CD8-positive, alpha-beta T cell (primary cell): ENCODE measurements at regions of chr2 and their contacts with region 1.

Region 1: GRCh38 chr2:148644883-148645538 is 460 bp downstream of the EPC2 start:
- DNase-seq: peak; percentile 90 to 98 (median 94)
- ATAC-seq: peak; percentile 78
- H3K4me3 ChIP-seq: peak overlapping the region; percentile 85 to 87
- H3K4me3 Mint-ChIP-seq: peak overlapping the region; percentile 87
- H3K27ac ChIP-seq: peak overlapping the region; percentile 87 to 96
- H3K27ac Mint-ChIP-seq: peak overlapping the region; percentile 98
- H3K4me1 ChIP-seq: peaks cover 33% of the 10 kb centered on the region
- H3K4me1 Mint-ChIP-seq: peaks cover 36% of the 10 kb centered on the region
- H3K27me3 ChIP-seq: no peaks in the 10 kb centered on the region
- H3K27me3 Mint-ChIP-seq: no peaks in the 10 kb centered on the region
- CTCF ChIP-seq: no peak

Region 2: GRCh38 chr2:148020111-148021058 is 624.6 kb before region 1 on chr2 and contains the start of gene ORC4:
- CTCF ChIA-PET with region 1: no interaction called
- POLR2A ChIA-PET with region 1: interaction called, 12 read pairs
- intact Hi-C with region 1: loop called (anchors 1 to 2 kb)
- DNase-seq: peak; percentile 91 to 100 (median 96)
- ATAC-seq: peak; percentile 86
- H3K4me3 ChIP-seq: peak within 1 kb of the TSS; percentile 96 to 97
- H3K4me3 Mint-ChIP-seq: peak within 1 kb of the TSS; percentile 100
- H3K27ac ChIP-seq: peak within 1 kb of the TSS; percentile 85 to 94
- H3K27ac Mint-ChIP-seq: peak within 1 kb of the TSS; percentile 98
- H3K4me1 ChIP-seq: peaks cover 47% of the 10 kb centered on the region
- H3K4me1 Mint-ChIP-seq: peaks cover 73% of the 10 kb centered on the region
- H3K27me3 ChIP-seq: no peaks in the 10 kb centered on the region
- H3K27me3 Mint-ChIP-seq: no peaks in the 10 kb centered on the region
- CTCF ChIP-seq: no peak
- total RNA-seq, gene ORC4: 28.5 to 29.9 TPM

Region 3: GRCh38 chr2:148071351-148071750 is 573.7 kb before region 1 on chr2:
- CTCF ChIA-PET with region 1: no interaction called
- POLR2A ChIA-PET with region 1: no interaction called
- intact Hi-C with region 1: no loop called
- DNase-seq: no peak
- ATAC-seq: no peak
- H3K4me3 ChIP-seq: no peak overlapping the region
- H3K4me3 Mint-ChIP-seq: no peak overlapping the region
- H3K27ac ChIP-seq: no peak overlapping the region
- H3K27ac Mint-ChIP-seq: no peak overlapping the region
- H3K4me1 ChIP-seq: no peaks in the 10 kb centered on the region
- H3K4me1 Mint-ChIP-seq: peaks cover 9% of the 10 kb centered on the region
- H3K27me3 ChIP-seq: no peaks in the 10 kb centered on the region
- H3K27me3 Mint-ChIP-seq: no peaks in the 10 kb centered on the region
- CTCF ChIP-seq: no peak

Region 4: GRCh38 chr2:148658807-148659722 is 14.1 kb after region 1 on chr2:
- CTCF ChIA-PET with region 1: no interaction called
- POLR2A ChIA-PET with region 1: interaction called, 9 read pairs
- intact Hi-C with region 1: loop called in 1 of 2 experiments (anchors 1 kb)
- DNase-seq: peak in 2 of 9 experiments; percentile 58 to 75
- ATAC-seq: peak; percentile 81
- H3K4me3 ChIP-seq: no peak overlapping the region
- H3K4me3 Mint-ChIP-seq: peak overlapping the region; percentile 66
- H3K27ac ChIP-seq: peak overlapping the region in 1 of 2 experiments; percentile 56
- H3K27ac Mint-ChIP-seq: peak overlapping the region; percentile 85
- H3K4me1 ChIP-seq: peaks cover 68% of the 10 kb centered on the region
- H3K4me1 Mint-ChIP-seq: peaks cover 78% of the 10 kb centered on the region
- H3K27me3 ChIP-seq: no peaks in the 10 kb centered on the region
- H3K27me3 Mint-ChIP-seq: no peaks in the 10 kb centered on the region
- CTCF ChIP-seq: no peak

Region 5: GRCh38 chr2:148764815-148765214 is 119.8 kb after region 1 on chr2:
- CTCF ChIA-PET with region 1: no interaction called
- POLR2A ChIA-PET with region 1: interaction called, 3 read pairs
- intact Hi-C with region 1: loop called (anchors 5 kb)
- DNase-seq: peak in 3 of 9 experiments; percentile 12 to 61 (median 36)
- ATAC-seq: peak; percentile 62
- H3K4me3 ChIP-seq: no peak overlapping the region
- H3K4me3 Mint-ChIP-seq: peak overlapping the region; percentile 42
- H3K27ac ChIP-seq: no peak overlapping the region
- H3K27ac Mint-ChIP-seq: no peak overlapping the region
- H3K4me1 ChIP-seq: peaks cover 5% of the 10 kb centered on the region
- H3K4me1 Mint-ChIP-seq: peaks cover 38% of the 10 kb centered on the region
- H3K27me3 ChIP-seq: no peaks in the 10 kb centered on the region
- H3K27me3 Mint-ChIP-seq: no peaks in the 10 kb centered on the region
- CTCF ChIP-seq: no peak

Region 6: GRCh38 chr2:148926291-148926961 is 281.4 kb after region 1 on chr2:
- CTCF ChIA-PET with region 1: no interaction called
- POLR2A ChIA-PET with region 1: interaction called, 3 read pairs
- intact Hi-C with region 1: loop called in 1 of 2 experiments (anchors 5 kb)
- DNase-seq: peak; percentile 13 to 71 (median 53)
- ATAC-seq: peak; percentile 87
- H3K4me3 ChIP-seq: peak overlapping the region; percentile 34 to 48
- H3K4me3 Mint-ChIP-seq: peak overlapping the region; percentile 75
- H3K27ac ChIP-seq: no peak overlapping the region
- H3K27ac Mint-ChIP-seq: peak overlapping the region; percentile 78
- H3K4me1 ChIP-seq: peaks cover 17% of the 10 kb centered on the region
- H3K4me1 Mint-ChIP-seq: peaks cover 12% of the 10 kb centered on the region
- H3K27me3 ChIP-seq: no peaks in the 10 kb centered on the region
- H3K27me3 Mint-ChIP-seq: no peaks in the 10 kb centered on the region
- CTCF ChIP-seq: peak; percentile 57